Dendritic cell treated with granulocyte-macrophage colony-stimulating factor and Interleukin-4, amounts not matched to agents 40 ng/mL and 50 ng/mL, for 4 days (primary cell): ENCODE measurements at regions of chr6 and their contacts with region 1.

Region 1: DNA sequence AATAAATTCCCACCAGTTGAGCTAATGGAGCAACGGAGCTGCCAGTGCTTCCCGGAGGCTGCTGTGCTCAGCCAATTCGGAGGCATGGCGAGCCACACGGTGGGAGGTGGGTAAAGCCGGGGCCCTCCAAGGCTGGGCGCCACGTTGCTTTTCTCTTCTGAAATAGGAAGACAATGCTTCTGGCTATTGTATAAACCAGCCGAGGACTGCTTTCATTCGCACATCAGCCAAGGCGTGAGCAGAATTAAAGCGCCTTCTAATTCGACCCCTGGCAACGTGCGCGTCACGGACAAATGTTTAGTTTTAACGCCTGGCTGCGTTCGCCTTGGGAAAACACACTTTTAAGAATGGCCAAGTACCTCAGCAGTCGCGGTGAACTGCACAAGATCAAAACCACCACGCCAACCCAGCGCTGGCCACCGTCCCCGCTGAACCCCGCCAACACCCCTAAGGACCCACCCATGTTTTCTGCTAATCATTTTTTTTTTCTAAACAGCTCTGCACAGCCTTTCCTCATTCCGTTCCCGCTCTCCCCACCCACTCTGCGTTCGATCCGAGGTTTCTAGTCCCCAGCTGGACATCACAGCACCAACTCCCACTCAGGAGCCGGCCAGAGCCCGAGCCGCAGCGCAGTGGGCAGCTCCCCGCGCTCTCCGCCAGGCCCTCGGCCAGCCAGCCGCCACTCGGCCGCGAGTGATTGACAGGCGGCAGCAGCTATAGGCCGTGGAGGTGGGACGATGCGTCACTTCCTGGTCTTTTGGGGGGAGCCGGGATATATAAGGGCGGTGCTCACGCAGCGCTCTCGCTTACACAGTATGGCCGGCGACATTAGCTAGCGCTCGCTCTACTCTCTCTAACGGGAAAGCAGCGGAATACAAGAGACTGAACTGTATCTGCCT is at the start of gene AMD1:
- H3K4me3 Mint-ChIP-seq: peak within 1 kb of the TSS; percentile 99
- H3K27ac Mint-ChIP-seq: peak within 1 kb of the TSS; percentile 100
- H3K4me1 Mint-ChIP-seq: peaks cover 27% of the 10 kb centered on the region
- H3K27me3 Mint-ChIP-seq: no peaks in the 10 kb centered on the region

Region 2: DNA sequence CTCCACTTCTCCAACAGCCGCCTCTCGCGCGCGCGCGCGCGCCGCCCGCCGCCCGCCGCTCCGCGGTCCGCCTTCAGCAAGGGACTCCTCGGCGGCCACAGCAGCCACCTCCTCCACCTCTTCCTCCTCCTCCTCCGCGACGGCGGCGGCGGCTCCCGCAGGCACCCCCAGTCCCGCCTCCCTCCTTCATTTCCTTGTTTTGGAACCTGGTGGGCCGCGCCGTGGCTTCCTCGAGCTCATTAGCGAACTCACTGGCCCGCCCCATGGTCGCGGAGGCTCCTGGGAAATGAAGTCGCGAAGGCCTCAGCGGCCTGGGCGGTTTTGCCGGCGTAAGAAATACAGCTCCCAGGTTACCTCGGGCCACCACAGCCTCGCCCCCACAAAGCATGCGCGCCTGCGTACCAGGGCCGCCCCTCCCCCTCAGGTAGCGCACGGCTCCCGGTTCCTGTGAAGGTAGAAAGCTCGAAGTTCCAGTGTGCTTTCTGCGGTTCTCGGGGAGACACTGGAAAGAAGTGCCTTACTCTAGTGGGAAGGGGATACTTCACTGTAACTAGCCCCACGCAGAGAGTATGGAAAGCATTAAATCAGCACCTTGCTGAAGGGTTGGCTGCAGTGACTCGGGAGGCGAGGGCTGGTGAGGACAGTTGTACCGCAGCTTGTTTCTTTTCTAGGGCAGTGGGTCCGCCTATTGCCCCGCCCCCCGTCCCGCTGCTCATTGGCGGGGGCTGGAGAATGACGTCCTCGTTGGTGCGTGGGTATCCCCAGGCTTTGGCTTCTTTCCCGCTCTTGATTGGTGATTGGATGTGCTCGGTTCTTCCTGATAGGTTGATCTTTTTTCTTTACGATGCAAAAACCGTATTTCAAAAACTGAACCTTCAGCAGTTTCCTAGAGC is 58.8 kb before region 1 on chr6 and contains the start of gene CDK19:
- intact Hi-C with region 1: loop called (anchors 1 kb)
- H3K4me3 Mint-ChIP-seq: peak within 1 kb of the TSS; percentile 88
- H3K27ac Mint-ChIP-seq: peak within 1 kb of the TSS; percentile 93
- H3K4me1 Mint-ChIP-seq: peaks cover 56% of the 10 kb centered on the region
- H3K27me3 Mint-ChIP-seq: no peaks in the 10 kb centered on the region

Region 3: DNA sequence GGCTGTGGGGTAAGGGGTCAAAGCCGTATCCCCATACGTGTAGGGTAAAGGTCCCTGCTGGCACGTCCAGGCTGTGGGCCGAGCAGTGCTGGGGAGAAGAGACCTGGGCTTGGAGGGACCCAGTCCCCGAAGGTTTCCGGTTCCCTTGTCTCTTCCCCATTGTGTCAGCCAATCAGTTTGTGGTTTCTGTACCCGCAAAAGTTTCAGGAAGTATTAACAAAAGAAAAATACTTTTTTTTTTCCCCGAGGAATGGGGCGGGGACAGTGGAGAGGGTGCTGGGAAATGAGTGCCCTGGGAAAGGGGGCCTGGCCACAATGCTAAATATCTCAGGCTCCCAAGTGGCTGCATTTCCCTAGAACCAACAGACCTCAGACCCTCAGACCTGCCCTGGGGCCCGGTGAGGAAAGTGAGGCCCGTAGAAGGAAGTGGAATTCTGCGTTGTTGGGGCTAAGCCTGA is 14.9 kb before region 1 on chr6:
- intact Hi-C with region 1: loop called (anchors 1 kb)
- H3K4me3 Mint-ChIP-seq: peak overlapping the region; percentile 71
- H3K27ac Mint-ChIP-seq: peak overlapping the region; percentile 93
- H3K4me1 Mint-ChIP-seq: peaks cover 31% of the 10 kb centered on the region
- H3K27me3 Mint-ChIP-seq: no peaks in the 10 kb centered on the region

Region 4: DNA sequence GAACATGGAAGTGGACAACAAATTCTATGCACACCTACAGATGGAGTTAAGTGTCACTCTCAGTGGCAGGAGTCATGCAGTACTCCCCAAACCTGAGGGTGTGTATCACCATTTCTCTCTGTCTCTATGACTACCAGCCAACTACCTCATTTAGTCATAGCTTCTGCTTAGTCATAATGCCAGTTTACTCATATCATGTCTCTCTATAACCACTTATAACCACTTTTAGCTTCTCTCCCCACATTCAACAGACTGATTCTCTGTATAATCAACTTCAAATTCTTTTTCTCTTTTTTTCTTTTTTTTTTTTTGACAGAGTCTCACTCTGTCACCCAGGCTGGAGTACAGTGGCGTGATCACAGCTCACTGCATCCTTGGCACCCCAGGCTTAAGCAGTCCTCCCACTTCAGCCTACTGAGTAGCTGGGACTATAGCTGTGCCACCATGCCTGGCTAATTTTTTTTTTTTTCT is 70.5 kb after region 1 on chr6:
- intact Hi-C with region 1: loop called (anchors 1 kb)
- H3K4me3 Mint-ChIP-seq: peak overlapping the region; percentile 50
- H3K27ac Mint-ChIP-seq: peak overlapping the region; percentile 87
- H3K4me1 Mint-ChIP-seq: peaks cover 9% of the 10 kb centered on the region
- H3K27me3 Mint-ChIP-seq: no peaks in the 10 kb centered on the region